Ovary (tissue), 10 donors: ENCODE measurements at regions of chr12 and their contacts with region 1.

Region 1: GRCh38 chr12:92145731-92146496 is at the start of gene BTG1:
- DNase-seq: peak; percentile 99 to 100 (median 99)
- H3K4me3 ChIP-seq: peak within 1 kb of the TSS; percentile 100
- H3K27ac ChIP-seq: peak within 1 kb of the TSS; percentile 96 to 99
- H3K4me1 ChIP-seq: no peaks in the 10 kb centered on the region
- H3K27me3 ChIP-seq: no peaks in the 10 kb centered on the region
- CTCF ChIP-seq: peak; percentile 7 to 31 (median 20)
- EP300 ChIP-seq: peak; percentile 64
- POLR2A ChIP-seq: peak; percentile 98
- total RNA-seq, gene BTG1: 63.6 to 145 (median 86.1) TPM

Region 2: DNA sequence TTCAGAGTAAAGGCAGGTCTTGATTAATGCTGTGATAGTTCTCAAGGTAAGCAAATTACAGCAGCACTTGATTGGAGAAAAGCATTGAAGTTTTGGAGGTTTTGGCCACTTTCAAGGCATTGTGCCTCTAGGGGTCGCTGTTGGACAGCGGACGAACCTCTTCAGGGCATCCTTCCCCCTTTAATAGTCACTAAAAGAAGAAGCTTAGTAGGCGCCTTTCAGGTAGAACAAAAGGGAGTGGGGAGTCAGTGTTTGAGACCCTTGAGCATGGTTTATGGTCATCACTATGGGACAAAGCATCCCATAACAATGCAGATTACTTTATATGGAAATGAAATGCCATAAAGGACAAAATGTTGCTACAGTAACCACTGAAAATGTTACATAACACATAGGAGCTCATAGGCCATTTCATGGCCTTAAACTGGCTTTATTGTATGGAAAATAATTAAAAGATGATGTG is 763.8 kb before region 1 on chr12:
- intact Hi-C with region 1: loop called in 1 of 4 experiments (anchors 5 kb)
- DNase-seq: peak; percentile 75 to 88 (median 84)
- H3K4me3 ChIP-seq: peak overlapping the region; percentile 19
- H3K27ac ChIP-seq: peak overlapping the region in 1 of 2 donors; percentile 46
- H3K4me1 ChIP-seq: no peaks in the 10 kb centered on the region
- H3K27me3 ChIP-seq: no peaks in the 10 kb centered on the region
- CTCF ChIP-seq: peak; percentile 66 to 78 (median 77)
- EP300 ChIP-seq: no peak
- POLR2A ChIP-seq: no peak

Region 3: GRCh38 chr12:91811481-91812287 is 334.2 kb before region 1 on chr12:
- intact Hi-C with region 1: loop called in 2 of 4 experiments (anchors 10 kb)
- DNase-seq: peak; percentile 62 to 84 (median 78)
- H3K4me3 ChIP-seq: no peak overlapping the region
- H3K27ac ChIP-seq: no peak overlapping the region
- H3K4me1 ChIP-seq: no peaks in the 10 kb centered on the region
- H3K27me3 ChIP-seq: no peaks in the 10 kb centered on the region
- CTCF ChIP-seq: peak in 2 of 3 donors; percentile 68 to 76
- EP300 ChIP-seq: no peak
- POLR2A ChIP-seq: no peak

Region 4: DNA sequence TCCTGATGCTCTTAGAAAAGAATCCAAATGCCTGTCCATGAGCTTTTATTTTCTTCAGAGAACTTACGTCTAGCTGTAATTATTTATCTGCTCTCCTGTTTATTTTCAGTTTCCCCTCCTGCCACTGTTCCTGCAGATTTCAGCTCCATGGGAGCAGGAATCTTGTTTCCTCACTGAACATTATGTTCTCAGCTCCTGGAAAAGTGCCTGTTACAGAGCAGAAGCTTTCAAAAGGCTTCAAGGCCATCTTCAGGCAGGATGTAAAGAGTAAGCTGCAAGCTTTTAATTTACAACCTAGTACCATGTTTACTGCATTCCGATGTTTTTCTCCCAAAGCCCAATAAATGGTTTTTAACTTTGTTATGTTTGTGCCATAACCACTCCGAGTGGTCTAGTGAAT is 98.1 kb after region 1 on chr12:
- intact Hi-C with region 1: loop called in 2 of 4 experiments (anchors 1 to 10 kb)
- DNase-seq: peak in 3 of 5 donors; percentile 29 to 67 (median 37)
- H3K4me3 ChIP-seq: no peak overlapping the region
- H3K27ac ChIP-seq: peak overlapping the region in 1 of 2 donors; percentile 49
- H3K4me1 ChIP-seq: peaks cover 5% of the 10 kb centered on the region
- H3K27me3 ChIP-seq: no peaks in the 10 kb centered on the region
- CTCF ChIP-seq: peak in 2 of 3 donors; percentile 30
- EP300 ChIP-seq: peak; percentile 72
- POLR2A ChIP-seq: no peak

Region 5: GRCh38 chr12:92505254-92506231 is 359.6 kb after region 1 on chr12:
- intact Hi-C with region 1: loop called in 2 of 4 experiments (anchors 10 kb)
- DNase-seq: peak; percentile 88 to 92 (median 90)
- H3K4me3 ChIP-seq: peak overlapping the region; percentile 19
- H3K27ac ChIP-seq: peak overlapping the region; percentile 75 to 89
- H3K4me1 ChIP-seq: peaks cover 32% of the 10 kb centered on the region
- H3K27me3 ChIP-seq: no peaks in the 10 kb centered on the region
- CTCF ChIP-seq: no peak
- EP300 ChIP-seq: no peak
- POLR2A ChIP-seq: no peak